SK-N-SH (cell line): ENCODE measurements at regions of chr7 and their contacts with region 1.

Region 1: DNA sequence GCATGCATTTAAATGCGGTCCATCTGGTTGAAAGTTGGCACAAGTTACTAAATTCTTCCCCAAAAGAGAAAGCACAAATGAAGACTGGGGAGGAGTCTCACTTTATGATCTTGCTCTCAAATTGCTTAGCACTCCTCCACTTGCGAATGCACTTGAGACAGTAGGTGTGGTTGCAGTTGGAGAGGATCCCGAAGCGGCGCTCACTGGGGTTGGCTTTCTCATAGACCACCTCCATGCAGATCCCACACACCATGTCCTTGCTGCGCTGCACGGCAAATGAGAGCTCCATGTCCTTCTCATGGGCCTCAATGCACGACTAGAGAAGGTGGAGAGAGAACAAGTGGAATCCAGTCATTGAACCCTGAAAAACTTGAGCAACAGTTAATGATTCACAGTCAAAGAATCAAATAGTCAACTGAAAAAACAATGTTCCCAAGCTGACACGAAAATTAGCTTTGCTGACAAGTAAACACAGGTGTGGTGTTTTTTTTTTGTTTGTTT is 22.7 kb downstream of the MKRN1 start:
- DNase-seq: no peak
- H3K4me3 ChIP-seq: no peak overlapping the region
- H3K27ac ChIP-seq: no peak overlapping the region
- H3K4me1 ChIP-seq: no peaks in the 10 kb centered on the region; a peak in 1 of 4 replicates
- H3K27me3 ChIP-seq: no peaks in the 10 kb centered on the region
- CTCF ChIP-seq: no peak
- EP300 ChIP-seq: no peak
- RAD21 ChIP-seq: no peak

Region 2: DNA sequence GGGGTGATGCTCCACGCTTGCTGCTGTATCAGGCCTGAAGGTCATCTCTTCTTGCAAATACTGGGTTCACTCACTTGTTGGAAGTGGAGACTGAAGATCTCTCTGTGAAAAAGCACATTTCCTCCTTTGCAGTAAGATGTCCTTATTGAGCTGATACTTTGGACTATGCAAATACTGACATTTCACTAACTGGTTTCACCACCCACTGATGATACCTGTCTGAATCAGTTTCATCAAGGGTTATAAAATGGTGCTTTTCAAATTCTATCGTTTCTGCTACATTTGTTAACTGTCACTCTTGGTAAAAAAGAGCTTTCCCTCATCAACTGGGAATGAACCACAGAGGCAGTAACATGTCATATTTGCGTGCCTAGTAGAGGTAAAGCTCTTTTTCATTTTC is 17.2 kb before region 1 on chr7:
- CTCF ChIA-PET with region 1: interaction called, 13 read pairs
- POLR2A ChIA-PET with region 1: no interaction called
- DNase-seq: no peak
- H3K4me3 ChIP-seq: no peak overlapping the region
- H3K27ac ChIP-seq: no peak overlapping the region
- H3K4me1 ChIP-seq: no peaks in the 10 kb centered on the region
- H3K27me3 ChIP-seq: no peaks in the 10 kb centered on the region
- CTCF ChIP-seq: no peak
- EP300 ChIP-seq: no peak
- RAD21 ChIP-seq: no peak

Region 3: GRCh38 chr7:140479062-140479738 is 22.6 kb after region 1 on chr7 and contains the start of gene MKRN1:
- CTCF ChIA-PET with region 1: interaction called, 13 read pairs
- POLR2A ChIA-PET with region 1: no interaction called
- DNase-seq: peak; percentile 99
- H3K4me3 ChIP-seq: peak within 1 kb of the TSS; percentile 65 to 81
- H3K27ac ChIP-seq: peak within 1 kb of the TSS; percentile 70 to 71
- H3K4me1 ChIP-seq: peaks cover 4 to 7% of the 10 kb centered on the region in 2 experiments; a peak in 2 of 4 replicates
- H3K27me3 ChIP-seq: peaks cover 8% of the 10 kb centered on the region; the same call in 1 of the 2 replicates
- CTCF ChIP-seq: no peak
- EP300 ChIP-seq: no peak
- RAD21 ChIP-seq: no peak
- polyA plus RNA-seq, gene MKRN1: 53.5 and 61.4 TPM in 2 replicates

Region 4: DNA sequence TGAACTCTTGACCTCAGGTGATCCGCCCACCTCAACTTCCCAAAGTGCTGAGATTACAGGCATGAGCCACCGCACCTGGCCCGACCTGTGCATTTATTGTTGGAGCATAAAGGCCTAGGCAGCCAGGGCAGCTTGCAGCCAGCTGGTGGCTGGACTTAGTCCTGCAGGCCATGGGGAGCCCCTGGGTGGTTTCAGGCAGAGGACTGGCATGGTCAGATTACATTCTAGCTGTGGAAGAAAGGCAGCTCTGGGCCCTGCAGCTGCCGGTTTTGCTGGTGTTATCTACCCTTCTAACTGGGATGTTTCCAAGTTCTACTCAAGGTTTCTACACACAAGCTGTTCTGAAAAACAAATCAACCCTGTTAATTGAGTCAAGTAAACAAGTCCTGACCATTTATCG is 45.4 kb after region 1 on chr7:
- CTCF ChIA-PET with region 1: no interaction called
- POLR2A ChIA-PET with region 1: no interaction called
- DNase-seq: no peak
- H3K4me3 ChIP-seq: no peak overlapping the region
- H3K27ac ChIP-seq: no peak overlapping the region
- H3K4me1 ChIP-seq: peaks cover 1 to 8% of the 10 kb centered on the region in 2 experiments; a peak in 1 of 4 replicates
- H3K27me3 ChIP-seq: no peaks in the 10 kb centered on the region
- CTCF ChIP-seq: no peak
- EP300 ChIP-seq: no peak
- RAD21 ChIP-seq: no peak

Region 5: DNA sequence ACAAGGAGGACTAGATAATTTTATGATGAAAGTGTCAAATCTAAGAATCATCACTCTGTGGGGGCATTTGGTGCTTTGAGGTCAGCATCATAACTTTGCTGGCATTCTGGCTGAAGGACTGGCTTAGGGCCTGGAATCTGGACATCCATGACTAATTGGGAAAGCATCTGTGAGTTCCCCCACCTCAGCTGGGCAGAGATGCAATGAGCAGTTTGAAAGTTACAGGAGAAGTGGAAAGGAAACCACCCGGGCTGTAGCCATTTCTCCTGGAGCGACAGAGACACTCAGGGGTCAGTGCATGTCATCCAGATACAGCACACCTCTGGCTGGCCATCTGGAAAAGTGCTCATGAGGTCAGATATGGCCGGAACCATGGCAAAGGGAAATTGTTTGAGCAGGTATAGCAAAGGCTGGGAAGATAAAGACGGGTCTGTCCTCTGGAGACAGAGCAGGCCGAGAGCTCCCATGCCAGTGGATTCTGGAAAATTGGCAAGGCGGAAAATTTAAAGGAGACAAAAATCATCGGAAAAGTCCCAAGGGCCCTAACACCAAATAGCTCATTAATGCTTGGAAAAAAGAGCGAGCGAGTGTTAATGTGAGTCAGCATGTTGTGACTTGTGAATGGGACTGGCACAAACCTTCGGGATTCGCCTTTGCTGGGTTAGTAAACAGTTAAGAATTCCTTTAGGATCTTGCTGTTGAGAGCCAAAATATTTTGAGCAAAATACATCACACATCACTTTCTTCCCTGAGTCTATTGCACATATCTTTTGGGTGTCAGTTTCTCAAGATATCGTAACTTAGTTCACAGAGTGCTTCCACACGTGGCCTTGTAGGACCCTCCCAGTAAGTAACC is 906.2 kb after region 1 on chr7:
- CTCF ChIA-PET with region 1: no interaction called
- POLR2A ChIA-PET with region 1: no interaction called
- DNase-seq: peak; percentile 32
- H3K4me3 ChIP-seq: no peak overlapping the region
- H3K27ac ChIP-seq: peak overlapping the region in 1 of 2 experiments; percentile 76; a peak in 2 of 4 replicates
- H3K4me1 ChIP-seq: peaks cover 0 to 35% of the 10 kb centered on the region in 2 experiments; a peak in 2 of 4 replicates
- H3K27me3 ChIP-seq: no peaks in the 10 kb centered on the region
- CTCF ChIP-seq: no peak
- EP300 ChIP-seq: no peak
- RAD21 ChIP-seq: no peak; the same call in 1 of the 2 replicates